ENCODE measurements at regions of chr1 and their contacts with region 1.

Region 1: GRCh38 chr1:219990782-219991510 is 55.4 kb downstream of the EPRS1 start:
- DNase-seq: peak; percentile 8
- ATAC-seq: peak; percentile 38; the same call in 1 of the 2 replicates
- H3K4me3 ChIP-seq: no peak overlapping the region
- H3K27ac ChIP-seq: no peak overlapping the region
- H3K4me1 ChIP-seq: no peaks in the 10 kb centered on the region
- H3K27me3 ChIP-seq: no peaks in the 10 kb centered on the region
- CTCF ChIP-seq: peak; percentile 42 to 77 (median 63); a peak in 5 of 6 replicates
- POLR2A ChIP-seq: no peak
- RAD21 ChIP-seq: peak; percentile 62

Region 2: DNA sequence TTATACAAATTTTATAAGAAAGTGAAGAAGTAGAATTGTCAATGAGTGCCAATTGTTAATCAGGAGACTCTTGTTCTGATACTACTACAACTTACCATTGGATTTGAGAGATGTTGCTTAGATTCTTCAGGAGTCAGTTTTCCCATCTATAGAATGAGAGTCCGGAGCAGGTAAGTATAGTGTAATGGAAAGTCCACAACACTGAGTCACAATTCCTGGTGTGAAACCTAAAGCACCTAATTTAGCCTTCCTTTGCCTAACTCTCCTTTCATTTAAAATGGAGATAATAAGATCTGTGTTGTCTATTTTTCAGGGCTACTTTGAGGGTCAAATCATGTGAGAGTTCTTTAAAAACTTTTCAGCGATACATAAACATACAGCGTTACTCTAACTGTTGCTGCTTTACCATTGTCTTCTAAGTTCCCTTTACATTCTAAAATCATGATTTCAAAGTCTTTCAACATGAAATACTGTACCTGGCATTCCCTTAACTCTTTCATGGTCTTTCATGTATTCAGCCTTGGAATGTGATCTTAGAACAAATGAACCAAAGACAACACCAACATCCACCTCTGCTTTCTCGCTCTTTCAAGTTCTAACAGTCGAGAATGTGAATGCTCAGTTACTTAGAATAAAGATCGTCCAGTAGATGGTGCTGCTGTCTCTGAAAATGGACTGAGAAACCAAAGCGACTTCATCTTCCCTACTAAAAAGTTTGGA is 153.5 kb before region 1 on chr1:
- CTCF ChIA-PET with region 1: no interaction called
- POLR2A ChIA-PET with region 1: no interaction called
- RAD21 ChIA-PET with region 1: no interaction called
- intact Hi-C with region 1: loop called (anchors 5 kb)
- DNase-seq: peak; percentile 60
- ATAC-seq: peak; percentile 88
- H3K4me3 ChIP-seq: no peak overlapping the region
- H3K27ac ChIP-seq: no peak overlapping the region
- H3K4me1 ChIP-seq: no peaks in the 10 kb centered on the region
- H3K27me3 ChIP-seq: peaks cover 7% of the 10 kb centered on the region; the same call in 1 of the 2 replicates
- CTCF ChIP-seq: peak; percentile 60 to 80 (median 63)
- POLR2A ChIP-seq: no peak
- RAD21 ChIP-seq: peak; percentile 89

Region 3: DNA sequence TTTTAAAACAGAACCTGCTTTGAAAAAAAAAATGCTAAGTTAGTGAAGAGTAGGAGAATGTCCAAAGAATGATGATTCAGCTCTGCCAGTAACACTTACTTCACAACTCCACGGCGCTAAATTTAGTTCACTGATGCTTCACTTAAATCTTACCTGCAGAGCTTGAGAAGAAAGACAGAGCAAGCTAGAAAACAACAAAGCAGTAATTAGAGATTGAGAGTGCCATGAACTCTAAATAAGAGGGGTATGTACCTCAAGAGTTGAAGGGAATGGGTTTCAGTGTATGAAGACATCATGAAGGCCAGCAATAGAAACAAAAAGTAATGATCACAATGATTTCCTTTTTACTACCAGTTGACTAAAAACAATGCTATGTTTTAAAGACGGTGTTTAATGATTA is 22.6 kb after region 1 on chr1:
- CTCF ChIA-PET with region 1: interaction called, 3 read pairs
- POLR2A ChIA-PET with region 1: interaction called, 3 read pairs
- RAD21 ChIA-PET with region 1: no interaction called
- intact Hi-C with region 1: loop called (anchors 1 kb)
- DNase-seq: no peak
- ATAC-seq: no peak
- H3K4me3 ChIP-seq: no peak overlapping the region
- H3K27ac ChIP-seq: no peak overlapping the region
- H3K4me1 ChIP-seq: no peaks in the 10 kb centered on the region
- H3K27me3 ChIP-seq: no peaks in the 10 kb centered on the region
- CTCF ChIP-seq: no peak
- POLR2A ChIP-seq: no peak
- RAD21 ChIP-seq: no peak